CD14-positive monocyte (primary cell): ENCODE measurements at regions of chr22 and their contacts with region 1.

Region 1: DNA sequence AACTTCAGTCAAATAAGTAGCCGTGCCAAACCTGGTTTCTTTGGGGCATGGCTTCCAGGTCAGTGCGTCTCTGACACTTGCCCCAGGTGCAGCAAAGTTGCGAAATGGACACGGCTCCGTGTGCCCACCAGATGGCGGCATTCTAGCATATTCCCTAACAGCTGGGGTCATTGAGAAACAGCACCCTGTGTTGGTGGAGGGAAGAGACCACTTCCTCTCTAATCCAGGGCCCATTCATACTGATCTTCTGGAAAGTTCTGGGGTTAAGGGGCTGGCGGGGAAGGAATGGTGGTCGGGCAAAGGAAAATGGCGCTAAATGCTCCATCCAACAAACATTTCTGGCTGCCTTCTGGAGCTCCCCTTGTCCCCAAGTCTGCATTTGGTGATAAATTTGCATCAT is 141.2 kb upstream of the TIMP3 start:
- DNase-seq: peak; percentile 54 to 74 (median 69)
- H3K4me3 ChIP-seq: no peak overlapping the region
- H3K4me3 Mint-ChIP-seq: no peak overlapping the region
- H3K27ac ChIP-seq: no peak overlapping the region
- H3K27ac Mint-ChIP-seq: peak overlapping the region in 2 of 7 donors; percentile 8 to 37
- H3K4me1 ChIP-seq: no peaks in the 10 kb centered on the region
- H3K4me1 Mint-ChIP-seq: peaks cover 11% of the 10 kb centered on the region
- H3K27me3 ChIP-seq: no peaks in the 10 kb centered on the region
- H3K27me3 Mint-ChIP-seq: peaks cover 7 to 14% (median 11%) of the 10 kb centered on the region in 3 donors
- CTCF ChIP-seq: peak; percentile 84

Region 2: DNA sequence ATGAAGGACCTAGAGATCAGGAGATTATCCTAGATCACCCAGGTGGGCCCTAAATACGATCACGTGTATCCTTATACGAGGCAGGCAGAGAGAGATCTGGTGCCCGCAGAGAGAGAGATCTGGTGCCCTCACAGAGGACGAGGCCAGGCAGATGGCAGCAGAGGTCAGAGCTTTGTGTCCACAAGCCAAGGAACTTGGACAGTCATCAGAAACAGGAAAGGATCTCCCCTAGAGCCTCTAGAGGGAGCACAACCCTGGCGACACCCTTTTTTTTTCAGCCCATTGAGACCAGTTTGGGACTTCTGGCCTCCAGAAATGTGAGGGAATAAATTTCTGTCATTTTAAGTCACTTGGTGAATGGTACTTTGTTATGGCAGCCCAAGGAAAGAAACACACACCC is 115.7 kb after region 1 on chr22:
- intact Hi-C with region 1: no loop called
- DNase-seq: no peak
- H3K4me3 ChIP-seq: no peak overlapping the region
- H3K4me3 Mint-ChIP-seq: peak overlapping the region in 1 of 2 donors; percentile 31
- H3K27ac ChIP-seq: no peak overlapping the region
- H3K27ac Mint-ChIP-seq: no peak overlapping the region
- H3K4me1 ChIP-seq: peaks cover 0 to 4% of the 10 kb centered on the region in 2 donors
- H3K4me1 Mint-ChIP-seq: peaks cover 10% of the 10 kb centered on the region
- H3K27me3 ChIP-seq: no peaks in the 10 kb centered on the region
- H3K27me3 Mint-ChIP-seq: peaks cover 3 to 8% (median 4%) of the 10 kb centered on the region in 3 donors
- CTCF ChIP-seq: no peak

Region 3: DNA sequence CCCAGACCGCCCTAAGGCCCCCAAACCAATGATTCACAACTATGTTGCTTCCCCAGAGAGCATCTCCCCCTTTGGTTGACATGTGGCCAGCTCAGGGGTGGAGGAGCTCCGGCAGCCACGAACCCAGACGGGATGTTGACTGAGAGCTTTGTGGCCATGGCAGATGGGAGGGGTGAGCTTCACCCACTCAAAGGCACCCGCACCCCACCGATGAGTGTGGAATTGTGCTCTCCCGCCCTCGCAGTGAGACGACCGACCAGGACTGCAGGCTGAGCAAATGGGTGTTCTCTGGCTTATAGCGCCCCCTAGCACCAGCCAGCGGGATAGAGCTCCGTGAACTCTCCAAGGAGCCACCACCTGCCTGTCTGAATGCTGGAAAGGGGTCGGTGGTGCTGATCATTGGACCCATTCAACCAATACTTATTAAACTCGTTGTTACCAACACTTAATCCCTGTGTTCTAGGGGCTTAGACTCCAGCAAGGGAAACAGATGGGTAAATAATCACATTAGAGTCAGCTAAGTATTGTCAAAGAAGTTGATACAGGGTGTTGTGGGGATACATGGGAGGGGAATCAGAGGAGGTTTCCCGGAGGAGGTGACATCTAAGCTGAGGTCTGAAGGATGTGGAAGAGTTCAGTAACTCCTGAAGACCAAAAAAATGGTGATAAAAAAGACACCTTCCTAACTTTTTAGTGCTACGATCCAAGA is 136.7 kb after region 1 on chr22:
- intact Hi-C with region 1: loop called (anchors 1 to 2 kb)
- DNase-seq: peak; percentile 40 to 62 (median 56)
- H3K4me3 ChIP-seq: no peak overlapping the region
- H3K4me3 Mint-ChIP-seq: no peak overlapping the region
- H3K27ac ChIP-seq: no peak overlapping the region
- H3K27ac Mint-ChIP-seq: no peak overlapping the region
- H3K4me1 ChIP-seq: peaks cover 0 to 5% of the 10 kb centered on the region in 2 donors
- H3K4me1 Mint-ChIP-seq: peaks cover 6% of the 10 kb centered on the region
- H3K27me3 ChIP-seq: peaks cover 10 to 25% of the 10 kb centered on the region in 2 donors
- H3K27me3 Mint-ChIP-seq: peaks cover 26 to 48% (median 26%) of the 10 kb centered on the region in 3 donors
- CTCF ChIP-seq: peak; percentile 86

Region 4: DNA sequence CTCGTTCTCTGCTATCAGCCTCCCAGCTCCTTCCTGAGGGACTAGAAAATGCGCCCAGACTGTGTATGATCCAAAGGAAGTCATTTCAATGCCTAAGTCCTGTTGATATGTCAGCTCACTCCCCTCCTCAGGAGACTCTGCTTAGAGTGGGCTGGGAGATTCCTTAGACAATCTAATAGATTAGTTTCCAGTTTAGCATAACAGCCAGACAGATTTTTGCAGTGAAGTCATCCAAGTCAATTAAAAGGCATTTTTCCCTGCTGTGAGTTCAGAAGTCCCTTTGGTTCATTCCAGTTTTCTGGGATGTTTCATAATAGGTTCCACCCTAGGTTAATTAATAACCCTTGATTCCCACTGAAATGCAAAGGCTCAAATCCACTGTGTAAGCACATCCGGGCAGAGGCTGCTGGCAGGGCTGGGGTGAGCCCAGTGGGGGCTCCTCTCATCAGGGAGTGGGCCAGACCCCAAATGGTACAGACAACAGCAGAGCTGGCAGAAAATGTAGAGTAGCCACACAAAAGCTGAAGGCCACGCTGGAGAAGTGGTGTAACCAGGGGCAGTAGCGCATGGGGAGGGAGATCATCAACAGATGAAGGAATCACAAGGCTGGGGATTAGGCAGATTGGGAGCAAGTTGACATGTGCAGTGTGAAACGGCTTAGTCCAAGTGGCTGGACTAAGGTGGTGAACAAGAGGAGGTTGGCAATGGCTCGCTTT is 307.3 kb after region 1 on chr22:
- intact Hi-C with region 1: no loop called
- DNase-seq: no peak
- H3K4me3 ChIP-seq: no peak overlapping the region
- H3K4me3 Mint-ChIP-seq: no peak overlapping the region
- H3K27ac ChIP-seq: no peak overlapping the region
- H3K27ac Mint-ChIP-seq: peak overlapping the region in 1 of 7 donors; percentile 21
- H3K4me1 ChIP-seq: no peaks in the 10 kb centered on the region
- H3K4me1 Mint-ChIP-seq: no peaks in the 10 kb centered on the region
- H3K27me3 ChIP-seq: no peaks in the 10 kb centered on the region
- H3K27me3 Mint-ChIP-seq: peaks cover 0 to 3% (median 0%) of the 10 kb centered on the region in 3 donors
- CTCF ChIP-seq: no peak